ENCODE measurements at regions of chr2 and their contacts with region 1.

Region 1: DNA sequence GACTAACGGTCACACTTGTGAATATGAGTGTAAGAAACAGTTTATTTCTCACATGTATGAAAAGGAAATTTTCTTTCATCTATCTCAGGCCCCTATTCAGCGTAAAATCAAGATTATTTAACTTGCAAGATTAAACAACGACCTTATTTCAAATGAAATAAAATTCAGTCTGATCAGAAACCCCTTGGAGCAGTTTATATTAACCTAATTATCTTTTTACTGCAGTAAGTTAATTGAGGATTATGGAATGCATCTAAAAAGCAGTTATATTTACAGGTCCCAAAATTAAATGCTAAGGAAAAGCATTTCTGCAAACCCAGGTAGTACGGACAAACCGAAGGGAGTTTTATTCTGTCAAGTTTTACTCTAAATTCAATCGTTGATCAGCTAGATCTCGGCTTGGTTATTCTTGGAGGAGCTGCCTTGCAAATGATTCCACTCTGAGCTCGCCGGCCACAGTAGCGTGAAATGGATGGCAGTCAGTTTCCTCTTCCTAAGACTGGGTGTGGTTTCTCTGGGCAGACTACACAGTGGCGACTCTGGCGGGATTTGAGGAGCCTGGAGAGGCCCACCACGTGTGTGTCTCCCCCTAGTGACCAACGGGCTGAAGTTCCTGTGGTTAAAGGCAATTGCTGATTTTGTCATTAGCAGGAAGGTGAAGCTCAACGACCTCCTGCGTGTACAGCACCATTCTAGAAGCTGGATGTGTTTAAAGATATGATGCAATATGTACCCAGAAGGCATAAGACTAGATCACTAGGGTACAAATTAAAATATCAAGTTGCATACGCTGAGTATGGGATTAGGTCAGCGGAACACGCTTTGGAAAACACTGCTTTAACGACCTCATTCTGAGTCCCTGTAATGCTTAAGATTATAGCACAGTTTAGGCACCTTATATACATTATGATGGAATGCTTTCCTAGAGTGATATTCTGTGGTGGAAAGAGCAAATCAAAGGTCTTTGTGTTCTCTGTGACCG is 36.4 kb downstream of the PRKRA start:
- DNase-seq: peak; percentile 96
- ATAC-seq: peak; percentile 85
- H3K4me3 ChIP-seq: peak overlapping the region; percentile 70
- H3K27ac ChIP-seq: peak overlapping the region; percentile 71
- H3K4me1 ChIP-seq: peaks cover 6% of the 10 kb centered on the region; the same call in 1 of the 2 replicates
- H3K27me3 ChIP-seq: no peaks in the 10 kb centered on the region
- CTCF ChIP-seq: peak; percentile 92

Region 2: GRCh38 chr2:177906041-177906718 is 508.4 kb before region 1 on chr2:
- CTCF ChIA-PET with region 1: no interaction called
- POLR2A ChIA-PET with region 1: no interaction called
- intact Hi-C with region 1: loop called (anchors 10 kb)
- DNase-seq: peak; percentile 82
- ATAC-seq: peak; percentile 89
- H3K4me3 ChIP-seq: no peak overlapping the region
- H3K27ac ChIP-seq: no peak overlapping the region
- H3K4me1 ChIP-seq: no peaks in the 10 kb centered on the region
- H3K27me3 ChIP-seq: no peaks in the 10 kb centered on the region
- CTCF ChIP-seq: peak; percentile 92

Region 3: DNA sequence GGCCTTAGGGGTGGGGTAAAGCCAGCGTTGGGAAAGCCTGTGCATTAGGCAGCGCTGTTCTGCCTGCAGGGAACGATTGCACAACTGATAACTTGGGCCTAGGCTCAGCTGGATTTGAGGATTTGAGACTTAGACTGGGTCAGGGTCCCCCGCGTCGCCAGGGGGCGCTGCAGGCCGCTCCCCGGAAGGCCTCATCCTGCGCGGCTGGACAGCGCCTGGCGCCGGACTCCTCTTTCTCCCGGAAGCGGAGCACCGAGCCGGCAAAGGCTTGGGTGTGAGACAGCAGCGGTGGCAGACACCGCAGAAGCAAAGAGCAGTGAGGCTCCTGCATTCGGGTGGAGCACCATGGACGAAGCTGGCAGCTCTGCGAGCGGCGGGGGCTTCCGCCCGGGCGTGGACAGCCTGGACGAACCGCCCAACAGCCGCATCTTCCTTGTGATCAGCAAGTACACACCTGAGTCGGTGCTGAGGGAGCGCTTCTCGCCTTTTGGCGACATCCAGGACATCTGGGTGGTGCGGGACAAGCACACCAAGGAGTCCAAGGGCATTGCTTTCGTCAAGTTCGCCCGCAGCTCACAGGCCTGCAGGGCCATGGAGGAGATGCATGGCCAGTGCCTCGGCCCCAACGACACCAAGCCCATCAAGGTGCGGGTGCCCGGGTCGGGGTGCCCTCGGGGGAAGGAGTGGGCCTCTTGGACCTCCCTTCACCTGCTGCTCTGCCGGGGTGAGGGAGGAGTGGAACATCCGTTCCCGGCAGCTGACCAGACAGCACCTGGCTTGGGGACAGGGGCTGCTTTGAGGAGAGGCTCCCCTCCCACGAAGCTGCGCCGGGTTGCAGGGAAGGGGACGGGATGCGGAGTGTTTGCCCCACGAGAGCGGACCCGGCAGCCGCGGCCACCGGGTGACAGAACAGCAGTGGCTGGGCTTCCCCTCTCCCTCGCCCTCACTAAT is 302.1 kb before region 1 on chr2 and contains the start of gene RBM45:
- CTCF ChIA-PET with region 1: interaction called, 6 read pairs
- POLR2A ChIA-PET with region 1: no interaction called
- intact Hi-C with region 1: loop called (anchors 1 kb)
- DNase-seq: peak; percentile 94
- ATAC-seq: peak; percentile 94
- H3K4me3 ChIP-seq: peak within 1 kb of the TSS; percentile 92
- H3K27ac ChIP-seq: peak within 1 kb of the TSS; percentile 26; the same call in 1 of the 2 replicates
- H3K4me1 ChIP-seq: peaks cover 9% of the 10 kb centered on the region
- H3K27me3 ChIP-seq: no peaks in the 10 kb centered on the region
- CTCF ChIP-seq: peak; percentile 91
- total RNA-seq, gene RBM45: 10.5 and 14.3 TPM in 2 replicates

Region 4: DNA sequence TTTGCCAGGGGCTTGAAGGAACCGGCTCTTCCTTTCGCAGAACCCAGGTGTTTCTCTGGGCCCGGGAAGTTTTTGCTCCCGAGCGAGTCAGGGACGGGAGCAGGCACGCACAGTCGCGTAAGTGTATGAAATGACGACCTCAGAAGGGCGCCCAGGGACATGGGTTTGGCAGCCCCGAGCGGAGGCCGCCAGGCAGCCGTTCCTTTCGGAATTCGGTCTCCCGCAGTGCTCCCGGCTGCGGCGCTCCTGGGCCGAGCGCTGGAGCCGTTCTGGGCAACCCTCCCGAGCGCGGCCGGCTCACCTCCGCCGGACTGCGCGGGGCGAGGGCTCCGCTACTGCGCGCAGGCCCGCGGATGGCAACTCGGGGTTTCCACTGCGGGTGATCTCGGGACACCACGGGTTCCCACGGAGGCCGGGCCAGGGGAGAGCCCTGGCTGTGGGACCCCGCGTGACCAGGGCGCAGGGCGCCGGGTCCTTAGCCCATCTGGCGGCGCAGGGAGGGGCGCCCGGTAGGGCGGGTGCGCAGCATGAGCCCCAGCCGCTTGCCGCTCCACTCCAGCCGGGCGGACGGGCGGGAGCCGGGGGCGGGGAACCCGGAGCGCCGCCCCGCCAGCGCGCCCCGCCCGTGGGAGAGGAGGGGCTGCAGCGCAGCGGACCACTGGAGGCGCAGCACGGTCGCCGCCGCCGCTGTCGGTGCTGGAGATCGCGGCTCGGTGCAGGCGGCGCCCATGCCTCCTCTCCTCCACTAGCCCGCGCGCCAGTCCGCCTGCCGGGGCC is 220.5 kb before region 1 on chr2 and contains the start of gene OSBPL6:
- CTCF ChIA-PET with region 1: interaction called, 3 read pairs
- POLR2A ChIA-PET with region 1: no interaction called
- intact Hi-C with region 1: loop called (anchors 1 kb)
- DNase-seq: peak; percentile 84
- ATAC-seq: peak; percentile 82
- H3K4me3 ChIP-seq: peak within 1 kb of the TSS; percentile 83
- H3K27ac ChIP-seq: peak within 1 kb of the TSS; percentile 19; the same call in 1 of the 2 replicates
- H3K4me1 ChIP-seq: peaks cover 26% of the 10 kb centered on the region
- H3K27me3 ChIP-seq: no peaks in the 10 kb centered on the region
- CTCF ChIP-seq: peak; percentile 8; the same call in 1 of the 2 replicates
- total RNA-seq, gene OSBPL6: 2.8 and 4.0 TPM in 2 replicates

Region 5: GRCh38 chr2:178309541-178309940 is 105.0 kb before region 1 on chr2:
- CTCF ChIA-PET with region 1: interaction called, 6 read pairs
- POLR2A ChIA-PET with region 1: no interaction called
- intact Hi-C with region 1: loop called (anchors 1 kb)
- DNase-seq: peak; percentile 51
- ATAC-seq: peak; percentile 75
- H3K4me3 ChIP-seq: no peak overlapping the region
- H3K27ac ChIP-seq: no peak overlapping the region
- H3K4me1 ChIP-seq: peaks cover 13% of the 10 kb centered on the region
- H3K27me3 ChIP-seq: no peaks in the 10 kb centered on the region
- CTCF ChIP-seq: no peak

Region 6: DNA sequence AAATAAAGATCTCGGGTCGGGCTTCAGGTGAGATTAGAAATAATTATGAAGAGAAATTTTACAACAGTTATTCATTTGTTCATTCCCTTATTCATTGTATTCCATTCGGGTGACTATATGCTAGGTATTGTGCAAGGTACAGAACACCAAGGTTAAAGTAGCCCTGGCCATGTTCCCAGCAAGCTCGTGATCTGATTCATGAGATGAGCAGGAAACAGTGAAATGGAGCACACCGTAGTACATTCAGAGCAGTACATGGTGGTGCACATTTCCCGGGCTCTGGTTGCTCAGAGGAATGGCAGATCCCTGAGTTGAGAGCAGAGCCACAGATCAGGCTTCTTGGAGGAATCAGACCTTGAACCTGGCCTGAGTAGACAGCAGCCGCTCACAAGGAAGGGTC is 51.3 kb before region 1 on chr2:
- CTCF ChIA-PET with region 1: no interaction called
- POLR2A ChIA-PET with region 1: no interaction called
- intact Hi-C with region 1: no loop called
- DNase-seq: peak; percentile 87
- ATAC-seq: peak; percentile 73
- H3K4me3 ChIP-seq: no peak overlapping the region
- H3K27ac ChIP-seq: no peak overlapping the region
- H3K4me1 ChIP-seq: peaks cover 12% of the 10 kb centered on the region
- H3K27me3 ChIP-seq: no peaks in the 10 kb centered on the region
- CTCF ChIP-seq: no peak

Region 7: GRCh38 chr2:179550214-179550613 is 1135.7 kb after region 1 on chr2:
- CTCF ChIA-PET with region 1: no interaction called
- POLR2A ChIA-PET with region 1: no interaction called
- intact Hi-C with region 1: no loop called
- DNase-seq: no peak
- ATAC-seq: no peak
- H3K4me3 ChIP-seq: no peak overlapping the region
- H3K27ac ChIP-seq: no peak overlapping the region
- H3K4me1 ChIP-seq: no peaks in the 10 kb centered on the region
- H3K27me3 ChIP-seq: no peaks in the 10 kb centered on the region
- CTCF ChIP-seq: no peak